RWPE1 (cell line): ENCODE measurements at regions of chr1 and their contacts with region 1.

Region 1: GRCh38 chr1:40315239-40315794 is 1.8 kb downstream of the COL9A2 start:
- DNase-seq: peak; percentile 79
- H3K27ac ChIP-seq: no peak overlapping the region
- CTCF ChIP-seq: peak; percentile 81

Region 2: DNA sequence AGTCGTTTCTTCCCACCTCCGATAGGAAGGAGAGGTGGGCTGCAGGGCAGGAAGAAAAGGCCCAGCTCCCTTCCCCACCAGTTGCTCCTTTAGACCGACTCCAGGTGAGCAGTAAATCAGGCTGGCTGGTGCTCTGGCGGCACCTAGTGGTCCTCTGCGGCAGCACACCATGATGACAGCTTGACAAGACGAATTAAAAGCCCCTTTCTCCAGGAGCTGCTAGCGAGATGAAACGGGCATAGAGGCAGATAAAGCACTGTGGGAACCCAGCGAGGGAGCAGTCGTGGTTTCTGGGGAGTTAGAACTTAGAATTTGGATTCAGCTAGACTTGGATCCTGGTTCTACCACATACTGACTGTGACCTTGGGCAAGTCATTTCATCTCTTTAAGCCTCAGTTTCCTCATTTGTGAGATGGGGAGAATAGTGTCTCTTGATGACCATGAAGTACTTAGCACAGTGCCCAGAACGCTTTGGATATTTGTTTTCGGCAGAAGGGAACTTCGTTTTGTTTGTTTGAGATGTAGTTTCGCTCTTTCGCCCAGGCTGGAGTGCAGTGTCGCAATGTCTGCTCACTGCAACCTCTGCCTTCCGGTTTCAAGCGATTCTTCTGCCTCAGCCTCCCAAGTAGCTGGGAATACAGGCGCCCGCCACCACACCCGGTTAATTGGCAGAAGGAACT is 23.6 kb after region 1 on chr1:
- CTCF ChIA-PET with region 1: interaction called, 12 read pairs
- POLR2A ChIA-PET with region 1: no interaction called
- DNase-seq: peak; percentile 80
- H3K27ac ChIP-seq: no peak overlapping the region
- CTCF ChIP-seq: peak; percentile 98